SK-N-SH (cell line): ENCODE measurements at regions of chr9 and their contacts with region 1.

Region 1: DNA sequence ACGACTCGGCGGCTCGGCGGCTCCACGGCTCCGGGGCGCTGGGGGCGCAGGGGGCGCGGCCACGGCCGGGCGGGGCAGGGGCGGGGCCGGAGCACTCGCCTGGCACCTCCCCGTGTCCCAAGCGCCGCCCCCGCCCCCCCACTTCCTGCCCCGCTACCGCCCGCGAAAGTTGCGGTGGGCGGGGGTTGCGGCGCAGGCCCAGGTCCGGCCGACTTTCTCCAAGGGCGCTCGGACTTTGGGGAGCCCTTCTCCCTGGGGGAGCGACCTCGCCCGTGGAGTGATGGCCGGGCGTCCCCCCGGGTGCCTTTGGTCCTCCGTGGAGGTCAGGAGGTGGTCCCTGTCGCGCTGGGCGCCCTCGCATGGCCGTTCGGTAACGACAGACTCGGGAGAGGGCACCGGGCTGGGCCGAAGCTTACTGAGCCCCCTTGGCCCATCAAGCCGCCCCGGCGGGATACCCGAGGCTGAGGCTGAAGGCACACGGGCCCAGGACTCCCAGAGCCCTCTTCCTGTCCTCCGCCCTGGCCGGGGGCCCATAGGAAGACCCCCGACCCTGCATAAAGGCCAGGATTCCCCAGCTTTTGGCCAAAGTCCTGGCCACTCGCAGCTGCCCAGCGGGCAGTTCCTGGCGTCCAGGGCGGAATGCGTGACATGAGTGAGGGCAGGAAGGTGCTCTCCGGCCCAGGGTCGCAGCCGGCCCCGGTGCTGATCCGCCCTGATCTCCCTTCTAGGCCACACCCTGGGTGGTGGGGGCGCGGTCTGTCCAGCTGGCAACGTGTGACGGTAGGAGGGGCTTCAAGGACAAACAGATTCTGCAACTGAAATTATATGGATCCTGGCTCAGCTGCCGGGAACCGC is 883 bp upstream of the VAV2 start:
- DNase-seq: peak; percentile 94
- H3K4me3 ChIP-seq: peak overlapping the region; percentile 75 to 87
- H3K27ac ChIP-seq: peak overlapping the region; percentile 82 to 93
- H3K4me1 ChIP-seq: peaks cover 6 to 34% of the 10 kb centered on the region in 2 experiments; a peak in 3 of 4 replicates
- H3K27me3 ChIP-seq: no peaks in the 10 kb centered on the region
- CTCF ChIP-seq: peak; percentile 63
- EP300 ChIP-seq: no peak
- RAD21 ChIP-seq: peak; percentile 50

Region 2: GRCh38 chr9:133773889-133774655 is 218.9 kb before region 1 on chr9:
- CTCF ChIA-PET with region 1: interaction called, 235 read pairs
- POLR2A ChIA-PET with region 1: no interaction called
- DNase-seq: peak; percentile 85
- H3K4me3 ChIP-seq: no peak overlapping the region; a peak in 1 of 4 replicates
- H3K27ac ChIP-seq: peak overlapping the region in 1 of 2 experiments; percentile 71; a peak in 2 of 4 replicates
- H3K4me1 ChIP-seq: peaks cover 0 to 19% of the 10 kb centered on the region in 2 experiments; a peak in 1 of 4 replicates
- H3K27me3 ChIP-seq: no peaks in the 10 kb centered on the region
- CTCF ChIP-seq: no peak
- EP300 ChIP-seq: peak in 1 of 2 experiments; percentile 77; a peak in 2 of 4 replicates
- RAD21 ChIP-seq: no peak

Region 3: GRCh38 chr9:133803028-133803585 is 189.9 kb before region 1 on chr9:
- CTCF ChIA-PET with region 1: interaction called, 236 read pairs
- POLR2A ChIA-PET with region 1: no interaction called
- DNase-seq: no peak
- H3K4me3 ChIP-seq: no peak overlapping the region
- H3K27ac ChIP-seq: no peak overlapping the region
- H3K4me1 ChIP-seq: peaks cover 0 to 3% of the 10 kb centered on the region in 2 experiments; a peak in 1 of 4 replicates
- H3K27me3 ChIP-seq: no peaks in the 10 kb centered on the region
- CTCF ChIP-seq: no peak
- EP300 ChIP-seq: no peak
- RAD21 ChIP-seq: no peak

Region 4: GRCh38 chr9:133839822-133840329 is 153.1 kb before region 1 on chr9:
- CTCF ChIA-PET with region 1: interaction called, 37 read pairs
- POLR2A ChIA-PET with region 1: interaction called, 3 read pairs
- DNase-seq: peak; percentile 56
- H3K4me3 ChIP-seq: no peak overlapping the region
- H3K27ac ChIP-seq: peak overlapping the region in 1 of 2 experiments; percentile 1; a peak in 1 of 4 replicates
- H3K4me1 ChIP-seq: peaks cover 0 to 59% of the 10 kb centered on the region in 2 experiments; a peak in 2 of 4 replicates
- H3K27me3 ChIP-seq: no peaks in the 10 kb centered on the region
- CTCF ChIP-seq: no peak
- EP300 ChIP-seq: no peak
- RAD21 ChIP-seq: no peak

Region 5: GRCh38 chr9:133876144-133876543 is 116.9 kb before region 1 on chr9:
- CTCF ChIA-PET with region 1: interaction called, 42 read pairs
- POLR2A ChIA-PET with region 1: interaction called, 3 read pairs
- DNase-seq: peak; percentile 62
- H3K4me3 ChIP-seq: no peak overlapping the region
- H3K27ac ChIP-seq: peak overlapping the region; percentile 96 to 99
- H3K4me1 ChIP-seq: peaks cover 26 to 98% of the 10 kb centered on the region in 2 experiments
- H3K27me3 ChIP-seq: no peaks in the 10 kb centered on the region
- CTCF ChIP-seq: peak; percentile 37; the same call in 1 of the 2 replicates
- EP300 ChIP-seq: no peak
- RAD21 ChIP-seq: no peak

Region 6: DNA sequence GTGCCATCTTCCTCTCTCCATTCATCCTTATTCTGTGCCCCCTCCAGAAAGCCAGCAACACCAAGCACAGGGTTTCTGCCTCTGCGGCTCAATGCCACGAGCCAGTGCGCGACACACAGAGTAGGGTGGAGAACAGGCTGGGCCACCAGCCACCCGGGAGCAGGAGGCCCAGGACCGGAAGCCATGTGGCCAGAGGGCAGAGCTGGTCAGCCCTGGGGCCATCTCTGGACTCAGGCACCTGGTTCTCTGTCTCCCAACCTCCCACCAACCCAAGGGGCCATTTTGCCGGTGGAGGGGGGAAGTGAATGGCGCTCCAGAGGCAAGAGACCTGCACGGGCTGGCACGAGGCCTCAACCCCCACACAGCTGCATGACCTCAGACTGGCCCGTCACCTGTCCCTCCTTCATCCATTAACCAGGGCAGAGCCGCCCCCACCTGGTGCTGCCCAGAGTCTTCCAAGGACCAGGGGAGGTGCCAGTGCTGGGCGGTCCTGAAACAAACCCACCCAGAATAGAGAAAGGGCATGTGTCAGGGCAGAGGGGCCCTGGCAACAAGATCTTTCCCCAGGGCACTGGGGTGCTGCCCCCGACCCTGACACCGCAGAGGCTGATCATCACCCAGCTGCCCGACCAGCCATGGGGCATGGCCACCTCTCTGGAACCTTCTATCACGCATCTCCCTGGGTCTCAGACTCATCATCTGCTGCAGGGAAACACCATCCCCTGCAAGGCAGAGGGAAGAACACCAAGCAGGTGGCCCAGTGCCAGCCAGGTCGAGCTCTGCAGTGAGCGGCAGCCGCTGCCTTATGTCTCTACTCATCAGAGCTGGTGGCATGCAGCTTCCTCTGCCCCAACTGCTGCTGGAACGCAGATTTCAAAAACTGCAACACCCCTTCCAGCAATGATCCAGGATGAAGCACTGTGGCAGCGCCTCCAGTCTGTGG is 12.8 kb before region 1 on chr9:
- CTCF ChIA-PET with region 1: interaction called, 14 read pairs
- POLR2A ChIA-PET with region 1: interaction called, 4 read pairs
- DNase-seq: peak; percentile 67
- H3K4me3 ChIP-seq: no peak overlapping the region
- H3K27ac ChIP-seq: peak overlapping the region in 1 of 2 experiments; percentile 36; a peak in 1 of 4 replicates
- H3K4me1 ChIP-seq: peaks cover 0 to 32% of the 10 kb centered on the region in 2 experiments; a peak in 1 of 4 replicates
- H3K27me3 ChIP-seq: no peaks in the 10 kb centered on the region
- CTCF ChIP-seq: no peak
- EP300 ChIP-seq: no peak
- RAD21 ChIP-seq: no peak

Region 7: DNA sequence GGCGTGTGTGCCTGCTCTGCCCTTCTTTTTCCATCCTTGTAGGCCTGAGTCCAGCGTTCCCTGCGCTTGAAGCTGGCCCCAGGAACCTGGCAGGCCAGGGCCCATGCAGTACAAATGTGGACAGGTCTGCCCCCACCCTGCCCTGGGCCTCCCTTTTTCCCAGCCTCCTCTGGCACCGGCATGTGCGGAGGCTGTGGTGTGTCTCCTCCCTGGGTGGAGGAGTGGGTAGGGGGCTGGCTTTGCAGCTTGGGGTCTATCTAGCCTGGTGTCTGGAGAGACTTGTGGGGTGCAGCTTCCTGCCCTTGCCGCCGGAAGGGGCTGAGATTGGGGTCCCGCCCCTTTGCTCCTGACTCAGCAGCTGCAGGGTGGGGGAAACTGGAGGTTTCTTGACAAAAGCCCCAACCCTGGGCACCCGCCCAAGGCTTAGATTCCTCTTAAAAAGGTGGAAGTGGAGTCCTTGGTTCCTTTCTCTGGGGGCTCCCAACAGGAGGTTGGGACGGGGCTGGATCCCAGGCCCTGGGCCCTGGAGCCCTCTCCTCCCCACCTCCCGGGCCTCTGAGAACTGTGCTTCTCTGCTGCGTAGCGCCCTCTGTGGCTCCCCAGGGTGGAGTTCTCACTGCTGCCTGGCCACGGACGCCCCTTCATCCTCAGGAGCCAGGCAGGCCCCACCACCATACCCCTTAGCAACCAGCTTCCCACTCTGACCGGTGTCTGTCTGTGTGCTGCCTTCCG is 351.2 kb after region 1 on chr9:
- CTCF ChIA-PET with region 1: no interaction called
- POLR2A ChIA-PET with region 1: no interaction called
- DNase-seq: no peak
- H3K4me3 ChIP-seq: no peak overlapping the region
- H3K27ac ChIP-seq: no peak overlapping the region
- H3K4me1 ChIP-seq: peaks cover 0 to 77% of the 10 kb centered on the region in 2 experiments; a peak in 1 of 4 replicates
- H3K27me3 ChIP-seq: no peaks in the 10 kb centered on the region
- CTCF ChIP-seq: peak; percentile 13; the same call in 1 of the 2 replicates
- EP300 ChIP-seq: no peak
- RAD21 ChIP-seq: no peak